ENCODE measurements at regions of chr1 and their contacts with region 1.

Region 1: GRCh38 chr1:109397538-109398342 is at the start of gene SORT1:
- DNase-seq: peak; percentile 96
- H3K4me3 ChIP-seq: peak within 1 kb of the TSS; percentile 72 to 88
- H3K27ac ChIP-seq: peak within 1 kb of the TSS; percentile 39 to 82; a peak in 3 of 4 replicates
- H3K4me1 ChIP-seq: peaks cover 14 to 19% of the 10 kb centered on the region in 2 experiments; a peak in 3 of 4 replicates
- H3K27me3 ChIP-seq: no peaks in the 10 kb centered on the region
- CTCF ChIP-seq: no peak; the same call in 1 of the 2 replicates
- EP300 ChIP-seq: no peak
- RAD21 ChIP-seq: no peak; the same call in 1 of the 2 replicates
- polyA plus RNA-seq, gene SORT1: 8.5 and 13.7 TPM in 2 replicates

Region 2: GRCh38 chr1:109239580-109240095 is 158.1 kb before region 1 on chr1:
- CTCF ChIA-PET with region 1: interaction called, 21 read pairs
- POLR2A ChIA-PET with region 1: no interaction called
- DNase-seq: peak; percentile 55
- H3K4me3 ChIP-seq: no peak overlapping the region
- H3K27ac ChIP-seq: peak overlapping the region; percentile 3 to 43; a peak in 2 of 4 replicates
- H3K4me1 ChIP-seq: peaks cover 11 to 14% of the 10 kb centered on the region in 2 experiments; a peak in 2 of 4 replicates
- H3K27me3 ChIP-seq: no peaks in the 10 kb centered on the region
- CTCF ChIP-seq: peak; percentile 53
- EP300 ChIP-seq: no peak
- RAD21 ChIP-seq: peak; percentile 28

Region 3: GRCh38 chr1:109277434-109278204 is 120.1 kb before region 1 on chr1:
- CTCF ChIA-PET with region 1: interaction called, 252 read pairs
- POLR2A ChIA-PET with region 1: interaction called, 14 read pairs
- DNase-seq: peak; percentile 88
- H3K4me3 ChIP-seq: no peak overlapping the region; a peak in 1 of 4 replicates
- H3K27ac ChIP-seq: peak overlapping the region in 1 of 2 experiments; percentile 44; a peak in 2 of 4 replicates
- H3K4me1 ChIP-seq: peaks cover 15 to 38% of the 10 kb centered on the region in 2 experiments
- H3K27me3 ChIP-seq: no peaks in the 10 kb centered on the region
- CTCF ChIP-seq: peak; percentile 90
- EP300 ChIP-seq: no peak
- RAD21 ChIP-seq: peak; percentile 77

Region 4: DNA sequence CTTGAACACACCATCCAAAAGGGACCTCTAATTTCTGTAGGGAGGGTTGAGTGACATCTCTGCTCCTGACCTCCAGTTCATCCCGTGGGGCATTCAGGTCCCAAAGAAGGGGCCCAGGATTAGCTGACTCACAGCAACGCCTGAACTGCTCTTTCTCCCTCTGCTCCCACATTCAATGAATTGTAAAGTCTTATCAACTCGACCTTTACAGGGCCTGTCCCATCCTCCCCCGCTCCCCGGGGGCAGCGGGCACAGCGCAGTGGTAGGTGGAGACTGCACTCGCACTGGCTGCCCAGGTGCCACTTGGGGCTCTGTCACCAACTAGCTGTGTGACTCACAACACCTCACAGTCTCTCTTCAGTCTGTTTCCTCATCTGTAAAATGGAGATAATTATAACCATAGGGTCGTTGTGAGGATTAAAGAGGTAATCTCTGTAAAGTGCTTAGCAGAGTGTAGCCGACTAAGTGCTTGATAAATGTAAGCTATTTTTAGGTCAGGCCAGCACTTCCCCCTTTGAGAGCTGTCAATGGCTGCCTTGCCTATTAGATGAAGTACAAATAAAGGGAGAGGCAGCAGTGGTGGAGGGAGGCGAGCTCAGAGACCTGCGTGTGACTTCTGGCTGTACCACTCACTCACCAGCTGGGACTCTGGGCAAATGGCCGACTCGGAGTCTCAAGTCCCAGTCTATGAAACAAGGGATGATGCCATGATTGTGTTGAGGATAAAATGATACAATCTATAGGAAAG is 90.3 kb before region 1 on chr1:
- CTCF ChIA-PET with region 1: interaction called, 13 read pairs
- POLR2A ChIA-PET with region 1: no interaction called
- DNase-seq: no peak
- H3K4me3 ChIP-seq: no peak overlapping the region
- H3K27ac ChIP-seq: no peak overlapping the region
- H3K4me1 ChIP-seq: peaks cover 0 to 3% of the 10 kb centered on the region in 2 experiments; a peak in 1 of 4 replicates
- H3K27me3 ChIP-seq: no peaks in the 10 kb centered on the region
- CTCF ChIP-seq: no peak
- EP300 ChIP-seq: no peak
- RAD21 ChIP-seq: no peak

Region 5: GRCh38 chr1:109385417-109385816 is 12.3 kb before region 1 on chr1:
- CTCF ChIA-PET with region 1: interaction called, 30 read pairs
- POLR2A ChIA-PET with region 1: no interaction called
- DNase-seq: no peak
- H3K4me3 ChIP-seq: no peak overlapping the region
- H3K27ac ChIP-seq: no peak overlapping the region
- H3K4me1 ChIP-seq: peaks cover 10 to 11% of the 10 kb centered on the region in 2 experiments; a peak in 3 of 4 replicates
- H3K27me3 ChIP-seq: no peaks in the 10 kb centered on the region
- CTCF ChIP-seq: no peak
- EP300 ChIP-seq: no peak
- RAD21 ChIP-seq: no peak

Region 6: GRCh38 chr1:109426278-109427170 is 28.8 kb after region 1 on chr1 and contains the start of gene PSMA5:
- CTCF ChIA-PET with region 1: interaction called, 15 read pairs
- POLR2A ChIA-PET with region 1: no interaction called
- DNase-seq: peak; percentile 95
- H3K4me3 ChIP-seq: peak within 1 kb of the TSS; percentile 83 to 92
- H3K27ac ChIP-seq: peak within 1 kb of the TSS; percentile 90 to 93
- H3K4me1 ChIP-seq: peaks cover 4 to 13% of the 10 kb centered on the region in 2 experiments; a peak in 3 of 4 replicates
- H3K27me3 ChIP-seq: no peaks in the 10 kb centered on the region
- CTCF ChIP-seq: no peak
- EP300 ChIP-seq: no peak
- RAD21 ChIP-seq: no peak
- polyA plus RNA-seq, gene PSMA5: 118 and 139 TPM in 2 replicates

Measured in SK-N-SH (cell line).